Activated CD4-positive, alpha-beta T cell treated with anti-CD3 and anti-CD28 coated beads for 36 hours (primary cell): ENCODE measurements at regions of chr5 and their contacts with region 1.

Region 1: GRCh38 chr5:158354958-158355357 is 496.0 kb upstream of the CLINT1 start:
- DNase-seq: no peak
- ATAC-seq: peak; percentile 93
- H3K4me3 Mint-ChIP-seq: peak overlapping the region; percentile 13
- H3K27ac Mint-ChIP-seq: peak overlapping the region; percentile 71
- H3K4me1 Mint-ChIP-seq: peaks cover 12% of the 10 kb centered on the region
- H3K27me3 Mint-ChIP-seq: peaks cover 4% of the 10 kb centered on the region

Region 2: DNA sequence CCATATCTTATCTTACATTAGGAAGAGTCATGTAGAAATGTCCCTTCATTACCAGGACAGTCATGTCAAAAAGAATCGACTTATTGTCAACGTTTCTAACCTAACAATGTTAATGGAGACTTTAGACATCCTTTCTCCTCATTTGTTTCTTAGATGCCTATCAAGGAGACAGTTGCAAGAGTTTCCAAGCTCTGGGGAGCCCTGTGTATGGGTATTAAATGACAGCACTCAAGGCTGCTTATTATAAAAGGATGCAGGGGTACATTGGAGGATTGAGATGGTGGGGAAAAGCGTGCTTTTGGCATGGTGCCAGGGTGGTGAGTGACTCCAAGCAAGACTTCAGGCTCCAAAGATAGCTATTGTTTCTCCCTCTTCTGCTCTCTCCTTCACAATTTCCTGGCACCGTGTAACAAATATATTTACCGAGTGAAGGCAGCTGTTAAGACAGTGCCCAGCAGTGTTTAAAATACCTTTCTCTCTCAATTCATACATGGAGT is 34.7 kb before region 1 on chr5:
- CTCF ChIA-PET with region 1: no interaction called
- POLR2A ChIA-PET with region 1: no interaction called
- intact Hi-C with region 1: no loop called
- DNase-seq: no peak
- ATAC-seq: no peak
- H3K4me3 Mint-ChIP-seq: no peak overlapping the region
- H3K27ac Mint-ChIP-seq: no peak overlapping the region
- H3K4me1 Mint-ChIP-seq: no peaks in the 10 kb centered on the region
- H3K27me3 Mint-ChIP-seq: no peaks in the 10 kb centered on the region

Region 3: DNA sequence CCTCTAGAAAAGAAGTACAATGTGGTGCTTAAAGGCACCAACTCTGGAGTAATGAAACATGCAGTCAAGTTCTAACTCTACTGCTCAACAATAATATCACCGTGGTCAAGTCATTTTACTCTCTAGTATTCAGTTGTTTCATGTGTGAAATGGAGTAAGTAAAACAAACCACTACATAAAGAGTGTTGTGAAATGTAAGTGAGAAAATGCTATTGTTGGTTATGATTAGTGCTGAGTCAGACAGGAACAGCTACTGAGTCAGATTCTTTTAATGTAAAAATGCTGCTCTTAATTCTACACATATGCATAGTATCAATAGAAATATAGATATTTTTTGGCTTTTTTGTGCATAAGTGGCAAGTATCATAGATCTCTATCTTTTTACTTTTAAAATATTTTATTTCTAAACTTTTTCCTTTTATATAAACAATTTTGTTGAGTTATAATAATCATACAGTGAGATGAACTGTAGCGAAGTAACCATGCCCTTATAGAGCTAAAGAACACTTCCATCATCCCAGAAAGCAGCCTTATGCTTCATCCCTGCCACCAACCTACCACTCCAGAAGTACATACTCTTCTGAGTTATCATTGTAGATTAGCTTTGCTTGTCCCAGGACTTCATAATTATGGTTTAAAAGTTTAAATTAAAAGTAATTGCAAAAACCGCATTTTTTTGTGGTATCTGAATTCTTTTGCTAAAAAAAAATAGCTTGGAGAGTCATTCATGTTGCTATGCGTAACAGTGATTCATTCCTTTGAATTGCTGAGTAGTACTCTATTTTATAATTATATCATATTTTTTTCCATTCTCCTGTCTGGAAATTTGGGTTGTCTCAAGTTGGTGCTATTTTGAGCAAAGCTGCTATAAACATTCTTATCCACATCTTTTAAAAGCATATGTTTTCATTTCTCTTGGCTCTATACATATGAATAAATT is 52.2 kb after region 1 on chr5:
- CTCF ChIA-PET with region 1: no interaction called
- POLR2A ChIA-PET with region 1: no interaction called
- intact Hi-C with region 1: loop called in 1 of 2 experiments (anchors 2 kb)
- DNase-seq: no peak
- ATAC-seq: peak; percentile 79
- H3K4me3 Mint-ChIP-seq: no peak overlapping the region
- H3K27ac Mint-ChIP-seq: no peak overlapping the region
- H3K4me1 Mint-ChIP-seq: peaks cover 7% of the 10 kb centered on the region
- H3K27me3 Mint-ChIP-seq: no peaks in the 10 kb centered on the region

Region 4: GRCh38 chr5:158543539-158544387 is 188.8 kb after region 1 on chr5:
- CTCF ChIA-PET with region 1: no interaction called
- POLR2A ChIA-PET with region 1: no interaction called
- intact Hi-C with region 1: loop called in 1 of 2 experiments (anchors 10 kb)
- DNase-seq: peak; percentile 19
- ATAC-seq: peak; percentile 86
- H3K4me3 Mint-ChIP-seq: no peak overlapping the region
- H3K27ac Mint-ChIP-seq: no peak overlapping the region
- H3K4me1 Mint-ChIP-seq: peaks cover 24% of the 10 kb centered on the region
- H3K27me3 Mint-ChIP-seq: no peaks in the 10 kb centered on the region

Region 5: DNA sequence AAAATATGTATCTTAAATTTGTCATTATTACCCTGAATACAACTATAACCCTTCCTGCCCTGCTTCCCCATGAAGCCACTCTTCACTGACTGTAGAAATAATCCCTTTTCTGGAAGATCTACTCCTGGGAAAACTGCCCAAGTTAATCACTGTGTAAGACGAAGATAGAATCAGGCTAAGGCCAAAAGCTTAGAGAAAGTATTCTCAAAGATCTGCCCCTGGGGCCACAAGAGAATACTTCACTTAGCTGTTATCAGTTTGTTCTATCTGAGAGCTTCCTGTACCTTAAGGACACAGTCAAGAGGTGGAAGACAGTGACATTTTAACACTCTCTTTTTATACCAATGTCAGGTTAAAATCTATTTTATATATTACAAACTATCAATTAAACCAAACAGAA is 820.6 kb after region 1 on chr5:
- CTCF ChIA-PET with region 1: no interaction called
- POLR2A ChIA-PET with region 1: no interaction called
- intact Hi-C with region 1: no loop called
- DNase-seq: no peak
- ATAC-seq: no peak
- H3K4me3 Mint-ChIP-seq: no peak overlapping the region
- H3K27ac Mint-ChIP-seq: peak overlapping the region; percentile 74
- H3K4me1 Mint-ChIP-seq: peaks cover 77% of the 10 kb centered on the region
- H3K27me3 Mint-ChIP-seq: no peaks in the 10 kb centered on the region